CD8-positive, alpha-beta T cell (primary cell): ENCODE measurements at regions of chr3 and their contacts with region 1.

Region 1: GRCh38 chr3:36957862-36958686 is 13.2 kb upstream of the TRANK1 start:
- DNase-seq: peak in 2 of 9 experiments; percentile 35 to 46
- ATAC-seq: no peak
- H3K4me3 ChIP-seq: no peak overlapping the region
- H3K4me3 Mint-ChIP-seq: peak overlapping the region; percentile 56
- H3K27ac ChIP-seq: no peak overlapping the region
- H3K27ac Mint-ChIP-seq: peak overlapping the region; percentile 0
- H3K4me1 ChIP-seq: no peaks in the 10 kb centered on the region
- H3K4me1 Mint-ChIP-seq: peaks cover 9% of the 10 kb centered on the region
- H3K27me3 ChIP-seq: no peaks in the 10 kb centered on the region
- H3K27me3 Mint-ChIP-seq: no peaks in the 10 kb centered on the region
- CTCF ChIP-seq: no peak

Region 2: GRCh38 chr3:36837089-36837488 is 121.0 kb before region 1 on chr3:
- CTCF ChIA-PET with region 1: interaction called, 8 read pairs
- POLR2A ChIA-PET with region 1: no interaction called
- intact Hi-C with region 1: loop called in 1 of 2 experiments (anchors 1 kb)
- DNase-seq: no peak
- ATAC-seq: no peak
- H3K4me3 ChIP-seq: no peak overlapping the region
- H3K4me3 Mint-ChIP-seq: no peak overlapping the region
- H3K27ac ChIP-seq: no peak overlapping the region
- H3K27ac Mint-ChIP-seq: peak overlapping the region; percentile 45
- H3K4me1 ChIP-seq: no peaks in the 10 kb centered on the region
- H3K4me1 Mint-ChIP-seq: peaks cover under 1% of the 10 kb centered on the region
- H3K27me3 ChIP-seq: no peaks in the 10 kb centered on the region
- H3K27me3 Mint-ChIP-seq: no peaks in the 10 kb centered on the region
- CTCF ChIP-seq: no peak

Region 3: GRCh38 chr3:36868614-36869436 is 89.2 kb before region 1 on chr3:
- CTCF ChIA-PET with region 1: interaction called, 67 read pairs
- POLR2A ChIA-PET with region 1: no interaction called
- intact Hi-C with region 1: loop called (anchors 2 to 5 kb)
- DNase-seq: peak in 8 of 9 experiments; percentile 13 to 82 (median 51)
- ATAC-seq: peak; percentile 83
- H3K4me3 ChIP-seq: no peak overlapping the region
- H3K4me3 Mint-ChIP-seq: no peak overlapping the region
- H3K27ac ChIP-seq: no peak overlapping the region
- H3K27ac Mint-ChIP-seq: peak overlapping the region; percentile 67
- H3K4me1 ChIP-seq: peaks cover 6% of the 10 kb centered on the region
- H3K4me1 Mint-ChIP-seq: peaks cover 25% of the 10 kb centered on the region
- H3K27me3 ChIP-seq: no peaks in the 10 kb centered on the region
- H3K27me3 Mint-ChIP-seq: no peaks in the 10 kb centered on the region
- CTCF ChIP-seq: peak; percentile 87

Region 4: GRCh38 chr3:36893137-36893557 is 64.9 kb before region 1 on chr3:
- CTCF ChIA-PET with region 1: interaction called, 22 read pairs
- POLR2A ChIA-PET with region 1: interaction called, 3 read pairs
- intact Hi-C with region 1: no loop called
- DNase-seq: peak in 4 of 9 experiments; percentile 26 to 84 (median 70)
- ATAC-seq: peak; percentile 95
- H3K4me3 ChIP-seq: no peak overlapping the region
- H3K4me3 Mint-ChIP-seq: peak overlapping the region; percentile 26
- H3K27ac ChIP-seq: peak overlapping the region; percentile 28 to 68
- H3K27ac Mint-ChIP-seq: peak overlapping the region; percentile 92
- H3K4me1 ChIP-seq: peaks cover 41% of the 10 kb centered on the region
- H3K4me1 Mint-ChIP-seq: peaks cover 55% of the 10 kb centered on the region
- H3K27me3 ChIP-seq: no peaks in the 10 kb centered on the region
- H3K27me3 Mint-ChIP-seq: no peaks in the 10 kb centered on the region
- CTCF ChIP-seq: no peak

Region 5: DNA sequence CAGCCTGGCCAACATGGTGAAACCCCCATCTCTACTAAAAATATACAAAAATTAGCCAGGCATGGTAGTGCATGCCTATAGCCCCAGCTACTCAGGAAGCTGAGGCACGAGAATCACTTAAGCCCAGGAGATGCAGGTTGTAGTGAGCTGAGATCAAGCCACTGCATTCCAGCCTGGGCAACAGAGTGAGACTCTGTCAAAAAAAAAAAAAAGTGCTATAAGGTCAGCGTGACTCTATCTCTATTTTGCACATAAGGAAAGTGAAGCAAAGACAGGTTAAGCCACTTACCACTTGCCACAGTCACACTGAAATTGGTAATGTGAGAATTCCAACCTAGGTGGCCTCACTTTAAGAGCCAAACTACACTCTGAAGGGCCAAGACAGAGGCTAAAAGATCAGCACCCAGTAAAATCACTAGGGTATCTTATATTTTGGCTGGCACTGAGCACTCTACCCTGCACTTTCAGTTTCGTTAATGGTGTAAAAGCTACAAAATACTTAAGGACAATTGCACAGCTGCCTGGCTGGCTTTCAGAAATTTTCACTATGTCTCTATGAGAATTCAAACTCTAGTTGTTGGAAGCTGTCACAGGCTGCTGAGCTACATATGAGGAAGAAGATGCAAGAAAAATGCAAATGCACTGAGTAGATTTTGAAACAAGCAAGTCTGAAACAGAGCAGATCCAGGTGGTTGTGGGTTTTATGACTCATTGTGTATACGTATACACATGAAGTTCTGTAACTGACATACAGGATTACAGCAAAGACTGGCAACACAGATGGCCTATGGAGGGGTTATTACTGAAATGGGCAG is 45.9 kb before region 1 on chr3:
- CTCF ChIA-PET with region 1: interaction called, 6 read pairs
- POLR2A ChIA-PET with region 1: interaction called, 3 read pairs
- intact Hi-C with region 1: loop called in 1 of 2 experiments (anchors 1 kb)
- DNase-seq: peak in 5 of 9 experiments; percentile 24 to 82 (median 50)
- ATAC-seq: peak; percentile 77
- H3K4me3 ChIP-seq: peak overlapping the region; percentile 24 to 32
- H3K4me3 Mint-ChIP-seq: peak overlapping the region; percentile 69
- H3K27ac ChIP-seq: peak overlapping the region; percentile 48 to 84
- H3K27ac Mint-ChIP-seq: peak overlapping the region; percentile 66
- H3K4me1 ChIP-seq: peaks cover 24% of the 10 kb centered on the region
- H3K4me1 Mint-ChIP-seq: peaks cover 41% of the 10 kb centered on the region
- H3K27me3 ChIP-seq: no peaks in the 10 kb centered on the region
- H3K27me3 Mint-ChIP-seq: no peaks in the 10 kb centered on the region
- CTCF ChIP-seq: no peak

Region 6: GRCh38 chr3:36969540-36970432 is 11.7 kb after region 1 on chr3:
- CTCF ChIA-PET with region 1: interaction called, 10 read pairs
- POLR2A ChIA-PET with region 1: interaction called, 6 read pairs
- intact Hi-C with region 1: no loop called
- DNase-seq: peak in 8 of 9 experiments; percentile 9 to 59 (median 30)
- ATAC-seq: peak; percentile 92
- H3K4me3 ChIP-seq: no peak overlapping the region
- H3K4me3 Mint-ChIP-seq: no peak overlapping the region
- H3K27ac ChIP-seq: no peak overlapping the region
- H3K27ac Mint-ChIP-seq: peak overlapping the region; percentile 58
- H3K4me1 ChIP-seq: peaks cover 6% of the 10 kb centered on the region
- H3K4me1 Mint-ChIP-seq: peaks cover 17% of the 10 kb centered on the region
- H3K27me3 ChIP-seq: no peaks in the 10 kb centered on the region
- H3K27me3 Mint-ChIP-seq: no peaks in the 10 kb centered on the region
- CTCF ChIP-seq: no peak

Region 7: GRCh38 chr3:37279236-37279635 is 321.2 kb after region 1 on chr3:
- CTCF ChIA-PET with region 1: no interaction called
- POLR2A ChIA-PET with region 1: no interaction called
- intact Hi-C with region 1: no loop called
- DNase-seq: no peak
- ATAC-seq: no peak
- H3K4me3 ChIP-seq: no peak overlapping the region
- H3K4me3 Mint-ChIP-seq: no peak overlapping the region
- H3K27ac ChIP-seq: no peak overlapping the region
- H3K27ac Mint-ChIP-seq: no peak overlapping the region
- H3K4me1 ChIP-seq: no peaks in the 10 kb centered on the region
- H3K4me1 Mint-ChIP-seq: peaks cover 24% of the 10 kb centered on the region
- H3K27me3 ChIP-seq: no peaks in the 10 kb centered on the region
- H3K27me3 Mint-ChIP-seq: no peaks in the 10 kb centered on the region
- CTCF ChIP-seq: no peak